Left ventricle myocardium inferior (tissue), 1 donor: ENCODE measurements at regions of chr5 and their contacts with region 1.

Region 1: GRCh38 chr5:141524604-141525597 is 36.0 kb downstream of the PCDHGC5 start:
- DNase-seq: peak; percentile 86
- H3K4me3 ChIP-seq: no peak overlapping the region
- H3K27ac ChIP-seq: peak overlapping the region; percentile 79
- H3K4me1 ChIP-seq: peaks cover 84% of the 10 kb centered on the region
- H3K27me3 ChIP-seq: no peaks in the 10 kb centered on the region
- CTCF ChIP-seq: peak; percentile 100

Region 2: DNA sequence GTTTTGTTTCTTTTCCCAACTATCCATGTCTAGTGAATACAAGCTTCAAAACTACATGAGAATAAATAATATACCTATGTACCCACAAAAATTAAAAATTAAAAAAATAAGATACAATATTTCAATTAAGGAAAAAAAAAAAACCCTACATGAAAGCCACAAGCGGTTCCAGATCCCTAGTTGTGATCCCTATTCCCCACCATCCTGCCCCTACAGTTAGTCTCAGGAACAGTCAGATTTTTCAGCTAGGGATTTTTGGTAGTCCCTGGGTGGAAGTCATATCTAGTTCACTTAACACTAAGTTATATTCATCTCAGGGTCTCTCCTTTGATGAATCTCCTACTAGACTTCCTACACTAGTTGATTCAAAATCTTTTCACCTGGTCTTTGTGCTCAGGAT is 492.3 kb before region 1 on chr5:
- intact Hi-C with region 1: no loop called
- DNase-seq: no peak
- H3K4me3 ChIP-seq: no peak overlapping the region
- H3K27ac ChIP-seq: no peak overlapping the region
- H3K4me1 ChIP-seq: no peaks in the 10 kb centered on the region
- H3K27me3 ChIP-seq: peaks cover 25% of the 10 kb centered on the region
- CTCF ChIP-seq: no peak

Region 3: GRCh38 chr5:141430332-141431113 is 94.4 kb before region 1 on chr5 and contains the start of gene PCDHGA12:
- intact Hi-C with region 1: loop called (anchors 10 kb)
- DNase-seq: peak; percentile 50
- H3K4me3 ChIP-seq: peak within 1 kb of the TSS; percentile 58
- H3K27ac ChIP-seq: peak within 1 kb of the TSS; percentile 65
- H3K4me1 ChIP-seq: peaks cover 24% of the 10 kb centered on the region
- H3K27me3 ChIP-seq: no peaks in the 10 kb centered on the region
- CTCF ChIP-seq: peak; percentile 70
- total RNA-seq, gene PCDHGA12: 4.8 TPM